ENCODE measurements at regions of chr20 and their contacts with region 1.

Region 1: GRCh38 chr20:56181583-56181982 is 66.9 kb upstream of the MC3R start:
- DNase-seq: no peak
- H3K4me3 ChIP-seq: no peak overlapping the region
- H3K27ac ChIP-seq: no peak overlapping the region
- H3K4me1 ChIP-seq: no peaks in the 10 kb centered on the region
- H3K27me3 ChIP-seq: no peaks in the 10 kb centered on the region
- CTCF ChIP-seq: peak; percentile 25 to 57

Region 2: GRCh38 chr20:54668271-54669039 is 1513.1 kb before region 1 on chr20:
- CTCF ChIA-PET with region 1: no interaction called
- dilution Hi-C with region 1: no loop called
- in situ Hi-C with region 1: loop called in 1 of 2 experiments (anchors 10 kb)
- intact Hi-C with region 1: loop called (anchors 5 kb)
- DNase-seq: no peak
- H3K4me3 ChIP-seq: no peak overlapping the region
- H3K27ac ChIP-seq: no peak overlapping the region
- H3K4me1 ChIP-seq: no peaks in the 10 kb centered on the region
- H3K27me3 ChIP-seq: no peaks in the 10 kb centered on the region
- CTCF ChIP-seq: peak; percentile 58 to 70

Measured in mammary epithelial cell (primary cell).